ENCODE measurements at regions of chr2 and their contacts with region 1.

Region 1: DNA sequence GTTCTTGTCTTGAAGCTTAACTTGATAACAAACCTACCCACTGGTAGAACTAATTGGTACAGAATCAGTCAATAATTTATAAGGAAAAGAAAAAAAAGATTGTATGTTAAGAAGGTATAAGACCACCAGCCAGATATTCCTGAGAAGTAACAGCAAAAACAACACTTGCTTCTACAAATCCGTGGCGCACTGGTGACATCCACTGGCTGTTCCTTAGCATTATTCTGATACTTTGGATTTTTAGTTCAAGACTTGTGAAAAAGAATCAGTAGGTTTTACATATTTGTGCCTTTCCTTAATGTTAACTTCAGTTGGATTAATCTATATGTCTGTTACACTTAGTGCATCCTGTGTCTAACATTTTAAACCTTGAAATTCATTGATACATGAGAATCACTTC is 141.8 kb downstream of the GRB14 start:
- DNase-seq: peak in 1 of 2 donors; percentile 19
- ATAC-seq: no peak
- H3K4me3 ChIP-seq: no peak overlapping the region
- H3K27ac ChIP-seq: no peak overlapping the region
- H3K4me1 ChIP-seq: no peaks in the 10 kb centered on the region
- H3K27me3 ChIP-seq: no peaks in the 10 kb centered on the region
- CTCF ChIP-seq: peak; percentile 24 to 66 (median 51)

Region 2: DNA sequence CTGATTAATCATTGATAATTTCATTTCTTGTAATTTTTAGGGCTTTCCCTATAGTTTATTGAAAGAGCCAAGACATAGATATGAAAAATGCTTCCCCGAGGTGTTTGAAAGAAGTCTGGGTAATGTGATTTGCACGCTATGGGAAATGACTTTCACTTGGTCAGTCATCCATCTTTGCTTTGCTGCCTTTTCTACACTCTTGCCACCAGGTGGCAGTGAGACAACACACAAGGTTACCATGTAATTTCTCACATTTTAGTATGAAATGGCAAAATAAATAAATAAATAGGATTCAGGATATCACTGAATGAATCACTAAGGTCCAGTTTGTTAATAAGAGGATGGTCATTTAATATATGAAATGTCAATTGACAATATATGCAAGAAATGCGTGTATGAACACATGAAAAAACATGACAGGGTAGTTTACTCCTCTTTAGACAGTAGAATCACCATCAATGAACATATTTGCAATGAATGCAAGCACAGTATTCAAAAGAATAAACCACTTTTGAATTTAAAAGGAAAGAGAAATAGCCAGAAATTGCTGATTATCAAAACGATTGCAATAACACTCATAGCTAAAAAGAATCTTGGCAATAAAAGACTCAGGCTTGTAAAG is 1588.7 kb before region 1 on chr2:
- intact Hi-C with region 1: loop called in 1 of 10 experiments (anchors 5 kb)
- DNase-seq: no peak
- ATAC-seq: no peak
- H3K4me3 ChIP-seq: no peak overlapping the region
- H3K27ac ChIP-seq: no peak overlapping the region
- H3K4me1 ChIP-seq: peaks cover 0 to 3% (median 0%) of the 10 kb centered on the region in 9 donors
- H3K27me3 ChIP-seq: no peaks in the 10 kb centered on the region
- CTCF ChIP-seq: peak in 7 of 9 donors; percentile 27 to 63 (median 41)

Region 3: GRCh38 chr2:163191372-163191771 is 1288.1 kb before region 1 on chr2:
- intact Hi-C with region 1: loop called in 2 of 10 experiments (anchors 5 to 10 kb)
- DNase-seq: no peak
- ATAC-seq: no peak
- H3K4me3 ChIP-seq: no peak overlapping the region
- H3K27ac ChIP-seq: no peak overlapping the region
- H3K4me1 ChIP-seq: no peaks in the 10 kb centered on the region
- H3K27me3 ChIP-seq: no peaks in the 10 kb centered on the region
- CTCF ChIP-seq: peak; percentile 23 to 71 (median 59)

Region 4: DNA sequence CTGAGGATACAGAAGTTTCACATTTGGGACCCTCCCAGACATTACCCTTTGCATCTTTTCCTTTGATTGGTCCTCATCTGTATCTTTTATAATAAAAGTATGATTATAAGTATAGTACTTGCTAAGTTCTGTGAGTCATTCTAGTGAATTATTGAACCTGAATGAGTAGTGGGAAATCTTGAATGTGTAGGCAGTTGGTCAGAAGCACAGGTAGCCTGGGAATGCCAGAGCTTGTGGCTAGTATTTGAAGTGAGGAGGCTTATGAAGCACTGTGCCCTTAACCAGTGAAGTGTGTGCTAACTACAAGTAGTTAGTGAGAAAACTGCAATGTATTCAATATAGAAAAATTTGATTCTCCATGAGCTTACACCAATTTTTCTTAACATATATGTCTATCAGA is 115.8 kb before region 1 on chr2:
- intact Hi-C with region 1: no loop called
- DNase-seq: no peak
- ATAC-seq: no peak
- H3K4me3 ChIP-seq: no peak overlapping the region
- H3K27ac ChIP-seq: no peak overlapping the region
- H3K4me1 ChIP-seq: no peaks in the 10 kb centered on the region
- H3K27me3 ChIP-seq: no peaks in the 10 kb centered on the region
- CTCF ChIP-seq: no peak

Measured in heart right ventricle (tissue), 16 donors.